ENCODE measurements at regions of chr19 and their contacts with region 1.

Region 1: GRCh38 chr19:14517840-14518505 is at the start of gene DNAJB1:
- DNase-seq: peak; percentile 85
- H3K4me3 Mint-ChIP-seq: peak within 1 kb of the TSS; percentile 87
- H3K27ac Mint-ChIP-seq: peak within 1 kb of the TSS; percentile 97
- H3K4me1 Mint-ChIP-seq: peaks cover 23% of the 10 kb centered on the region
- H3K27me3 Mint-ChIP-seq: no peaks in the 10 kb centered on the region
- CTCF ChIP-seq: no peak
- total RNA-seq, gene DNAJB1: 71.6 and 97.4 TPM in 2 replicates

Region 2: DNA sequence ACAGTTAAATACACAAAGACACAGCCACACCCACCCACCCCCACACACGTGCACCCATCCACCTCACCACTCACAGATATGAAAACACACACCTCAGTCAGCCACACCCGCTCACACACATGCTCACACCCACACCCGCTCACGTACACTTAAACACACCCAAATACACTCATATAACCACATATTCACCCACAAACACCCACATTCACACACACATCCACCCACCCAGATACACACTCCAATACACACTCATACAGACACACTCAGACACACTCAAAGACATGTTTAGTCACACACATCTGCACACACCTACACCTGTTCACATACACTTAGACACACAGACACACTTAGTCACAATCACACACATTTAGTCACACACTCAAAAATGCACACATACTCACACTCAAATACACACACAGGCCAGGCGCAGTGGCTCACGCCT is 342.6 kb before region 1 on chr19:
- CTCF ChIA-PET with region 1: no interaction called
- POLR2A ChIA-PET with region 1: no interaction called
- intact Hi-C with region 1: no loop called
- DNase-seq: no peak
- H3K4me3 Mint-ChIP-seq: no peak overlapping the region
- H3K27ac Mint-ChIP-seq: no peak overlapping the region
- H3K4me1 Mint-ChIP-seq: peaks cover 6% of the 10 kb centered on the region
- H3K27me3 Mint-ChIP-seq: no peaks in the 10 kb centered on the region
- CTCF ChIP-seq: no peak

Region 3: DNA sequence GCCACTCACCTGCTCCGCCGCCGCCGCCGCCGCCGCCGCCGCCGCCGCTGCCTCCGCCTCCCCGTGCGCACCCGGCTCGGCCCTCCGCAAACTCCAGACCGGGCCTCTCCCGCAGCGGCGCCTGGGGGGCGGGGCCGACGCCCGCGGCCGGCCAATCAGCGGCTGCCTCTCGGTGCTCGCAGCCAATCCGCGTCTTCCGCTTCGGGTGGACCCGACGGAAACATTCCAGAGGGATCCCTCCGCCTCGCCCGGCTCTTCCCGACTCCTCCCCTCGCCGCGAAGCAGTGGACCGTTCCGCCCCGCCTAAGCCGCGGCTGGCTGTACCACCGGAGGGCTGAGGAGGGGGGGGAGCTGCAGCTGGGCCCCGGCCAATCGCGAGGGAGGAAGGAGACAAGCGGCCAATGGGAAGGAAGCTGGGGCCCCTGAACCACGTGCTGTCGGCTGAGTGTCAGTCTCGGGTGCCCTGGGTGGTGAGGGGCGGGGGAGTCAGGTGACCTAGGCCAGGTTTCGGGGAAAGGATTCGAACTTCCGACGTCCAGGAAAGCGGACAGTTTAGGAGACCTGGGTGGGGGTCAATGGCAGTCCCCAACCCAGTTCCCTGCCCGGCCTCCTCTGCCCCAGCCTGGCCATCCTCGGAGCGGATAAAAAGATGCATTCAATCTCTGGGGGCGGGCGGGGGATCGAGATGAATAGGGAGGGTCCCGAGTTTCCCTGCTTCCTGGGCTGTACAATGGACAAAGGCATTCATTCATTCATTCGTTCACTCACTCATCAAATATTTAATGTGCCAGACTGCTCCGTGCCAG is 21.7 kb before region 1 on chr19 and contains the start of gene GIPC1:
- CTCF ChIA-PET with region 1: interaction called, 4 read pairs
- POLR2A ChIA-PET with region 1: interaction called, 203 read pairs
- intact Hi-C with region 1: no loop called
- DNase-seq: peak; percentile 99
- H3K4me3 Mint-ChIP-seq: peak within 1 kb of the TSS; percentile 76
- H3K27ac Mint-ChIP-seq: peak within 1 kb of the TSS; percentile 83
- H3K4me1 Mint-ChIP-seq: peaks cover 38% of the 10 kb centered on the region
- H3K27me3 Mint-ChIP-seq: no peaks in the 10 kb centered on the region
- CTCF ChIP-seq: no peak
- total RNA-seq, gene GIPC1: 107 and 108 TPM in 2 replicates

Region 4: GRCh38 chr19:14529254-14530004 is 11.5 kb after region 1 on chr19 and contains the start of gene TECR:
- CTCF ChIA-PET with region 1: interaction called, 3 read pairs
- POLR2A ChIA-PET with region 1: interaction called, 148 read pairs
- intact Hi-C with region 1: no loop called
- DNase-seq: peak; percentile 100
- H3K4me3 Mint-ChIP-seq: peak within 1 kb of the TSS; percentile 93
- H3K27ac Mint-ChIP-seq: peak within 1 kb of the TSS; percentile 52
- H3K4me1 Mint-ChIP-seq: peaks cover 27% of the 10 kb centered on the region
- H3K27me3 Mint-ChIP-seq: no peaks in the 10 kb centered on the region
- CTCF ChIP-seq: no peak
- total RNA-seq, gene TECR: 74.1 and 106 TPM in 2 replicates

Region 5: GRCh38 chr19:14550201-14550784 is 32.3 kb after region 1 on chr19:
- CTCF ChIA-PET with region 1: interaction called, 12 read pairs
- POLR2A ChIA-PET with region 1: interaction called, 40 read pairs
- intact Hi-C with region 1: loop called (anchors 2 kb)
- DNase-seq: peak; percentile 74
- H3K4me3 Mint-ChIP-seq: no peak overlapping the region
- H3K27ac Mint-ChIP-seq: peak overlapping the region; percentile 80
- H3K4me1 Mint-ChIP-seq: peaks cover 35% of the 10 kb centered on the region
- H3K27me3 Mint-ChIP-seq: no peaks in the 10 kb centered on the region
- CTCF ChIP-seq: no peak

Region 6: DNA sequence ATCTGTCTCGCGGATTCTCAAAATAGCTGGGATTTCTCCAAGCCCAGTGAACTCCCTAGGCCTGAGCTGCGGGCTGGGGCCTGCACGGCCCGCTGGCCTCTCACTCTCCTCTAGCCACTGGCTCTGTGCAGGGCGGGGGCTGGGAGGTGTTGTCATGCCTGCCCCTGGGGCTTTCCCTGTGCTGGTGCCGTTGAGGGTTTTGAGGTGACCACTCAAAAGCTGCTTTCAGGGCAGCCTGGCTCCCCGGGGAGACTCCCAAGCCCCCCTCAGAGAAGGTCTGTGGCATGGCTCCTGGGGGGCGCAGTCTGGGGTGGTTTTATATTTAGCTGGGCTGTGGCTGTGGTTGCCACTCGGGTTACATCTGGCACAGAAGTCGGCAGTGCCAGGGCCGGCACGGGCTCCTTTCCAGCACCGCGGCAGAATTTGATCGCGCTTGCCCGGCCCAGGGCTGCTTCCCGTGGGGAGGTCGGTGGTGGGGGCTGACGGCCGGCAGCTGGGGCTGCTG is 43.9 kb after region 1 on chr19:
- CTCF ChIA-PET with region 1: interaction called, 3 read pairs
- POLR2A ChIA-PET with region 1: interaction called, 40 read pairs
- intact Hi-C with region 1: no loop called
- DNase-seq: peak; percentile 84
- H3K4me3 Mint-ChIP-seq: peak overlapping the region; percentile 62
- H3K27ac Mint-ChIP-seq: peak overlapping the region; percentile 94
- H3K4me1 Mint-ChIP-seq: peaks cover 20% of the 10 kb centered on the region
- H3K27me3 Mint-ChIP-seq: no peaks in the 10 kb centered on the region
- CTCF ChIP-seq: no peak